Activated CD4-positive, alpha-beta T cell treated with anti-CD3 and anti-CD28 coated beads for 36 hours (primary cell): ENCODE measurements at regions of chr11 and their contacts with region 1.

Region 1: DNA sequence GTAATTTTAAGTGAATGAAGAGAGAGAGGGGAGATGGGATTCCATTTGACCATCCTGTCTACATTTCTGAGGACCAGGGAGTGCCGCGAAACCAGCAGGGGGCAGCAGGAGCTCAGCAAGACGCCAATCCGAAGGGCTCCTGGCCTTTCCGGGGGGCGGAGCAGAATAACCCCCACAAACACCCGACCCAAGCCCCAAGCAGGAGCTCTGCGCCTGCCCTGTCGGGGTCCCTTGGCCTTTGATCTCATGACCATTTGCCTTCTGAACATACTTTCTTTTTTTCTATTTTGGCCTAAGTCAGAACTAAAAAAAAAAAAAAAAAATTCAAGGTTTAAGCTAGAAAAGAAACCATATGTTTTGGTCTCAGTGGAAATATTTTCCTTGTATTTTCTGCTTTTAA is 21.9 kb upstream of the SCN2B start:
- DNase-seq: peak; percentile 92
- ATAC-seq: peak; percentile 35
- H3K4me3 Mint-ChIP-seq: peak overlapping the region; percentile 20
- H3K27ac Mint-ChIP-seq: peak overlapping the region; percentile 71
- H3K4me1 Mint-ChIP-seq: peaks cover 14% of the 10 kb centered on the region
- H3K27me3 Mint-ChIP-seq: no peaks in the 10 kb centered on the region

Region 2: GRCh38 chr11:118216621-118217481 is 18.5 kb after region 1 on chr11:
- CTCF ChIA-PET with region 1: interaction called, 23 read pairs
- POLR2A ChIA-PET with region 1: interaction called, 14 read pairs
- intact Hi-C with region 1: loop called (anchors 1 kb)
- DNase-seq: peak; percentile 76
- ATAC-seq: peak; percentile 73
- H3K4me3 Mint-ChIP-seq: peak overlapping the region; percentile 76
- H3K27ac Mint-ChIP-seq: peak overlapping the region; percentile 100
- H3K4me1 Mint-ChIP-seq: peaks cover 97% of the 10 kb centered on the region
- H3K27me3 Mint-ChIP-seq: no peaks in the 10 kb centered on the region

Region 3: GRCh38 chr11:118251858-118252652 is 53.7 kb after region 1 on chr11 and contains the start of gene MPZL3:
- CTCF ChIA-PET with region 1: interaction called, 20 read pairs
- POLR2A ChIA-PET with region 1: no interaction called
- intact Hi-C with region 1: no loop called
- DNase-seq: peak; percentile 90
- ATAC-seq: peak; percentile 65
- H3K4me3 Mint-ChIP-seq: peak within 1 kb of the TSS; percentile 82
- H3K27ac Mint-ChIP-seq: peak within 1 kb of the TSS; percentile 96
- H3K4me1 Mint-ChIP-seq: peaks cover 36% of the 10 kb centered on the region
- H3K27me3 Mint-ChIP-seq: no peaks in the 10 kb centered on the region
- total RNA-seq, gene MPZL3: 45.9 to 53.2 TPM

Region 4: DNA sequence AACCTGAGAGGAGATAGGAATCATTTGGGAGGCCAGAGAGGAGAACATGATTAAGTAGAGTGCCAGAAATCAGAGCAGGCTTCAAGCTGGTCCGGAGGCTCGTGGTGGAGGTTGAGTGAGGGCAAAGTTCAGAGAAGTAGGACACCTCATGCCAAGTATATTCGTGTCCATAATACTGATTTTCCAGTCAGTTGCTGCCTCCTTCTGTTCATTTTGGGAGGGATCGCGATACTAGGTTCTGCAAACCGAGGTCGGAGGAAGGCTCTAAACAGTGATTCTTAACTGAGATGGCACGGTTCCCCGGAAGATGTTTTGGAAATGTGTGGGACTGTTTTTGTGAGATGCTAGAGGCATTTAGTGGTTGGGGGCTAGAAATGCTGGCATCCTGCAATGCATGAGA is 92.6 kb after region 1 on chr11:
- CTCF ChIA-PET with region 1: interaction called, 14 read pairs
- POLR2A ChIA-PET with region 1: no interaction called
- intact Hi-C with region 1: loop called (anchors 1 kb)
- DNase-seq: peak; percentile 58
- ATAC-seq: peak; percentile 74
- H3K4me3 Mint-ChIP-seq: no peak overlapping the region
- H3K27ac Mint-ChIP-seq: peak overlapping the region; percentile 8
- H3K4me1 Mint-ChIP-seq: peaks cover 26% of the 10 kb centered on the region
- H3K27me3 Mint-ChIP-seq: no peaks in the 10 kb centered on the region

Region 5: GRCh38 chr11:118311518-118311917 is 113.1 kb after region 1 on chr11:
- CTCF ChIA-PET with region 1: interaction called, 11 read pairs
- POLR2A ChIA-PET with region 1: interaction called, 6 read pairs
- intact Hi-C with region 1: no loop called
- DNase-seq: no peak
- ATAC-seq: no peak
- H3K4me3 Mint-ChIP-seq: no peak overlapping the region
- H3K27ac Mint-ChIP-seq: peak overlapping the region; percentile 74
- H3K4me1 Mint-ChIP-seq: peaks cover 91% of the 10 kb centered on the region
- H3K27me3 Mint-ChIP-seq: no peaks in the 10 kb centered on the region

Region 6: GRCh38 chr11:118353084-118353710 is 154.8 kb after region 1 on chr11:
- CTCF ChIA-PET with region 1: interaction called, 8 read pairs
- POLR2A ChIA-PET with region 1: no interaction called
- intact Hi-C with region 1: loop called in 1 of 2 experiments (anchors 1 kb)
- DNase-seq: no peak
- ATAC-seq: no peak
- H3K4me3 Mint-ChIP-seq: no peak overlapping the region
- H3K27ac Mint-ChIP-seq: no peak overlapping the region
- H3K4me1 Mint-ChIP-seq: peaks cover 28% of the 10 kb centered on the region
- H3K27me3 Mint-ChIP-seq: no peaks in the 10 kb centered on the region

Region 7: GRCh38 chr11:118572061-118572980 is 374.0 kb after region 1 on chr11 and contains the start of gene ARCN1:
- CTCF ChIA-PET with region 1: interaction called, 5 read pairs
- POLR2A ChIA-PET with region 1: no interaction called
- intact Hi-C with region 1: loop called in 1 of 2 experiments (anchors 5 kb)
- DNase-seq: peak; percentile 88
- ATAC-seq: peak; percentile 80
- H3K4me3 Mint-ChIP-seq: peak within 1 kb of the TSS; percentile 89
- H3K27ac Mint-ChIP-seq: peak within 1 kb of the TSS; percentile 96
- H3K4me1 Mint-ChIP-seq: peaks cover 44% of the 10 kb centered on the region
- H3K27me3 Mint-ChIP-seq: no peaks in the 10 kb centered on the region
- total RNA-seq, gene ARCN1: 148 to 154 TPM